ENCODE measurements at regions of chr14 and their contacts with region 1.

Region 1: DNA sequence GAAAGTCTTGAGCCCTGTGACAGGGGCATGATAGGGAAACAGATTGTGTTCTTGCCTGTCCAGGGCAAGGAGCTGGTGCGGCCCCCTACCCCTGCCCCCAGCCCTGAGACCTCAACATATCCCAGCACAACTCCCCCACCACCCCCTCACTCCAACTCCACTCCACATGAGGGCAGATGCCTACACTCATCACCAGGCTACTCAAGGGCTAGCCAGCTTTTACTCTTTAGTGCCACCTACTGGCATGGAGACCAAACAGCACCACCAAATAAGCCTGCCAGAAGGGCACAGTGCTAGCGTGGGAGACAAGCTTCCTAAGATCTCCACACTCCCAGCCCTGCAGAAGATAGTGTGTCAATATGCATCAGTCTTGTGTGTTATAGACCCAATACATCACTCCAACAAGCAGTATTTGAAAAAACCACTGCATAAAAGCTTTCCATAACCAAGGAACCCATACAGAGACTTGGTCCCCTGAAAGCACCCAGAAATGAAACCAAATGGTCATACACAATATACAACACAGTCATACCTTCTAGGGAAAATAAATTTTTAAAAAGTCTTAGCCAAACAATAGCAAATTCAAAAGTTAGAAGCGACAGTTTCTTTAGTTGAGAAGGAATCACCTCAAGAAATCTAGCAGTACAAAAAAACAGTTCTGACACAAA is 154.4 kb downstream of the KCNK10 start:
- DNase-seq: peak; percentile 50
- H3K4me3 ChIP-seq: no peak overlapping the region
- H3K27ac ChIP-seq: no peak overlapping the region
- H3K4me1 ChIP-seq: no peaks in the 10 kb centered on the region
- CTCF ChIP-seq: peak; percentile 82

Region 2: DNA sequence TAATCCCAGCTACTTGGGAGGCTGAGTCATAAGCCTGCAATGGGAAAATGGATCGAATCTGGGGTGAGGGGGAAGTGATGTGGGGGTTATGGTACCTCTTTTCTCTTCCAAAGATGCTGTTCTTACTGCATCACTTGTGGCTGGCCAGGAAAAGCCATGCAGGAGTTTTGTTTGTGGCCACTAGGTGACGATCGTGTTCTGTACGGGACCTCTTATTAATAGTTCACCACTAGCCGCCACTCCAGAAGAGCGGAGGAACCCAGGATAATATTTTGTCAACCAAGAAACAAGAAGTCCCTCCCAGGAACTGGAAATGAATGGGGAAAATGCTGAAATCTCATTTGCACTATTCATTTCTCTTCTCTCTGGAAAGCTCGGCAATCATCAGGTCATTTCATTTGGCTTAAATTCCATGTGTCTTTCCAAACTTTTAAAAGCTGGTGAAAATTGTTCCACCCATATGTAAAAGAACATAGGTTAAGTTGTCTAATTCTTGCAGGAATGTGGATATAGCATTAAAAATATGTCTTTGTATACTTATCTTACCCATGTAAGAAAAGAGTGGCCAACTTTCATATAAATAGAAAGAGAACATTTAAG is 154.8 kb before region 1 on chr14:
- CTCF ChIA-PET with region 1: no interaction called
- POLR2A ChIA-PET with region 1: no interaction called
- intact Hi-C with region 1: loop called (anchors 2 kb)
- DNase-seq: peak; percentile 59
- H3K4me3 ChIP-seq: no peak overlapping the region
- H3K27ac ChIP-seq: no peak overlapping the region
- H3K4me1 ChIP-seq: no peaks in the 10 kb centered on the region
- CTCF ChIP-seq: peak; percentile 87

Region 3: GRCh38 chr14:88145471-88145870 is 23.2 kb before region 1 on chr14:
- CTCF ChIA-PET with region 1: no interaction called
- POLR2A ChIA-PET with region 1: no interaction called
- intact Hi-C with region 1: no loop called
- DNase-seq: no peak
- H3K4me3 ChIP-seq: no peak overlapping the region
- H3K27ac ChIP-seq: no peak overlapping the region
- H3K4me1 ChIP-seq: no peaks in the 10 kb centered on the region
- CTCF ChIP-seq: no peak

Region 4: DNA sequence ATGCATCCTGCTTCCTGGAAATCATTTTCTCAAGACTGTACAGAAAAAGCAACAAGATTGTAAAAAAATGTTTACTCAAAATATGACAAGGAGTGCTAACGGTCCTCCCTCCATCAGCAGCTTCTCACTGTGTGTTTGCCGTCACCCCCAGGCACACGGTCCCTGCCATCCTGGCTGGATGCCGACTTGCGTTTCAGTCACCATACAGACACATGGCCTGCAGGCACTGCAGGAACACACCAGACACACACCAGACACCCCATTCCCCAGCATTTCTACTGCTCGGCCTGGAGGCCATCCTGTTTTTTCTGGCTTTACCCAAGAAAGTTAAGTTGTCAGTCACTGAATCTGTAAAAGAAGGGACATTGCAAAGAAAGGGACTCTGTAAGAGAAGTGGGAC is 143.6 kb after region 1 on chr14:
- CTCF ChIA-PET with region 1: no interaction called
- POLR2A ChIA-PET with region 1: no interaction called
- intact Hi-C with region 1: no loop called
- DNase-seq: no peak
- H3K4me3 ChIP-seq: no peak overlapping the region
- H3K27ac ChIP-seq: no peak overlapping the region
- H3K4me1 ChIP-seq: no peaks in the 10 kb centered on the region
- CTCF ChIP-seq: no peak

Measured in OCI-LY7 (cell line).